T-cell (primary cell): ENCODE measurements at regions of chr20 and their contacts with region 1.

Region 1: GRCh38 chr20:32858701-32859372 is at the start of gene EFCAB8:
- DNase-seq: no peak
- ATAC-seq: peak in 1 of 4 experiments; percentile 12
- H3K4me3 ChIP-seq: no peak within 1 kb of the TSS
- H3K4me3 Mint-ChIP-seq: no peak within 1 kb of the TSS
- H3K27ac ChIP-seq: no peak within 1 kb of the TSS
- H3K27ac Mint-ChIP-seq: peak within 1 kb of the TSS; percentile 44 to 74
- H3K4me1 ChIP-seq: no peaks in the 10 kb centered on the region
- H3K4me1 Mint-ChIP-seq: peaks cover 19 to 30% (median 21%) of the 10 kb centered on the region in 3 donors
- H3K27me3 ChIP-seq: no peaks in the 10 kb centered on the region
- H3K27me3 Mint-ChIP-seq: no peaks in the 10 kb centered on the region
- total RNA-seq, gene EFCAB8: 0.80 to 1.5 (median 1.2) TPM

Region 2: DNA sequence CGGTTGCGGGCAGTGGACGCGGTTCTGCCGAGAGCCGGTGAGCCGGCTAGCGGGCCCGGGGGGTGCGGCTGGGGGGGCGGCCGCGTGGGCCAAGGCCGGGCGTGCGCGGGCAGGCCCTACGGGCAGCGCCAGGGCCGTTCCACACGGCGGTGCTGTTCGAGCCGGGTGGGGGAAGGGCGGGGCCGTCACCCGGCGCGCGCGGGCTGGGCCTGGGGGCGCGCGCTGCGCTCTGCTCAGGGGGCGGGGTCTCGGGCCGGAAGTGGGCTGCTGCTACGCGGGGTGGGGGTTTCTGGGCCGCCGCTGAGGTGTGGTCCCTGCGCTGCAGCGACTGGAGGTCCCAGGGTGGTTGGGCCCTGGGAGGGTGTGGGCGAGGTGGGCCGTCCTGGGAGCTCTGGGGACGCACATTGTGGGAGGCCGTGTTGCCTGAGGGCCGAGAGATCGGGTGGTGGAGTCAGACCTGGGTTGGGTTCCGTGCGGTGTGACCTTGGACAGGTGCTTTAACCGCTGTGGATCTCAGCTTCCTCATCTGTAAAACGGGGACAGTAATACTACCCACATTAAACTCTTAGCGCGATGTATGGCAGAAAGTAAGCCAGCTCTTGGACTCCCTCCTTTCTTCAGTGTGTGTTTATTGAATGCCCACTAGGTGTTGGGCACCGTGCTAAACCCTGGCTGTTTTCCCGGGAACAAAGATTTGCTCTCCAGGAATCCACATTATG is 38.7 kb before region 1 on chr20:
- CTCF ChIA-PET with region 1: no interaction called
- POLR2A ChIA-PET with region 1: interaction called in 1 of 2 experiments, 12 read pairs
- DNase-seq: peak in 27 of 35 experiments; percentile 55 to 91 (median 76)
- ATAC-seq: peak; percentile 77 to 87 (median 80)
- H3K4me3 ChIP-seq: peak overlapping the region; percentile 62 to 88
- H3K4me3 Mint-ChIP-seq: peak overlapping the region; percentile 89 to 96 (median 94)
- H3K27ac ChIP-seq: peak overlapping the region; percentile 89
- H3K27ac Mint-ChIP-seq: peak overlapping the region; percentile 93 to 94
- H3K4me1 ChIP-seq: peaks cover 22 to 48% of the 10 kb centered on the region in 2 experiments
- H3K4me1 Mint-ChIP-seq: peaks cover 43 to 47% (median 46%) of the 10 kb centered on the region in 3 donors
- H3K27me3 ChIP-seq: no peaks in the 10 kb centered on the region
- H3K27me3 Mint-ChIP-seq: no peaks in the 10 kb centered on the region

Region 3: DNA sequence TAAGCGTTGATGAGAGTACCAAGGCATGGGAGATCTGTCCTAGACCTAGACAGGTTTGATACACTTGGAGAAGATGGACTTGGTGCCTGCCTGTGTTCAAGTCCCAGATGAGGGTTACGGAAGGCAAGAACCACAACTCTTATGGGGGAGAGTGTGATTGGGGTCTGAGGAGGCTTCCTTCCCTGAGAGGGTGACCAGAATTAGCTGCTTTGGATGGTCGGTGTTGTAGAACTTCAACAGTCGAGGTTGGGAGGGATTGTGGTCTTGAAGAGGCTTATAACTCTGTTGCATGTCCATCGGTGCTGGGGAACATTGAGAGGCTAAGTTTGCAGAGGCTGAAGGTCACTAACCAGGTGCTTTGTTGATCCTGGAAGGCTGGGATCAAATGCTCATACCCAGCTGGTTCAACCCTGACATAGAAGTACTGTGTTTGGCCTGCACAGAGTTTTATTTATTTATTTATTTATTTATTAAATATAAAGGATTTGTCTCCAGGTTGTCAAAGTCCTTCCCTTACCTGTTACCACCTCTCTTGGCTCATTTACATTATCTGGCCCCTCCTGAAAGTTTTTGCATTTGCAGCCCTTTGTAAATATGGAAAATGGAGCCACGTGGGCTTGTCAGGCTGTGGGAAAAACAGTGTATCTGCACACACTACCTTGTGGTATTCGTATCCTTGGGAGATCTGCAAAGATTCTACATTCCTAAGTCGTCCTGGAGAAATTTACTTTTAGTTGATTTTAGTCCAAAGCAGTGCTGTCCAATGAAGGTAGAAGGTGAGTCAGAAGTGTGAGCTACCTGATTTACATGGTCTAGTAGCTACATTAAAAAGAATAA is 15.9 kb before region 1 on chr20:
- CTCF ChIA-PET with region 1: interaction called, 4 to 16 read pairs
- POLR2A ChIA-PET with region 1: interaction called in 1 of 2 experiments, 4 read pairs
- DNase-seq: no peak
- ATAC-seq: no peak
- H3K4me3 ChIP-seq: no peak overlapping the region
- H3K4me3 Mint-ChIP-seq: no peak overlapping the region
- H3K27ac ChIP-seq: no peak overlapping the region
- H3K27ac Mint-ChIP-seq: peak overlapping the region in 1 of 2 donors; percentile 11
- H3K4me1 ChIP-seq: peaks cover 2 to 9% of the 10 kb centered on the region in 2 experiments
- H3K4me1 Mint-ChIP-seq: peaks cover 46 to 55% (median 51%) of the 10 kb centered on the region in 3 donors
- H3K27me3 ChIP-seq: no peaks in the 10 kb centered on the region
- H3K27me3 Mint-ChIP-seq: no peaks in the 10 kb centered on the region

Region 4: GRCh38 chr20:32896521-32897280 is 37.9 kb after region 1 on chr20:
- CTCF ChIA-PET with region 1: no interaction called
- POLR2A ChIA-PET with region 1: interaction called in 1 of 2 experiments, 14 read pairs
- DNase-seq: no peak
- ATAC-seq: no peak
- H3K4me3 ChIP-seq: no peak overlapping the region
- H3K4me3 Mint-ChIP-seq: no peak overlapping the region
- H3K27ac ChIP-seq: no peak overlapping the region
- H3K27ac Mint-ChIP-seq: no peak overlapping the region
- H3K4me1 ChIP-seq: no peaks in the 10 kb centered on the region
- H3K4me1 Mint-ChIP-seq: no peaks in the 10 kb centered on the region
- H3K27me3 ChIP-seq: no peaks in the 10 kb centered on the region
- H3K27me3 Mint-ChIP-seq: no peaks in the 10 kb centered on the region